ENCODE measurements at regions of chr4 and their contacts with region 1.

Region 1: DNA sequence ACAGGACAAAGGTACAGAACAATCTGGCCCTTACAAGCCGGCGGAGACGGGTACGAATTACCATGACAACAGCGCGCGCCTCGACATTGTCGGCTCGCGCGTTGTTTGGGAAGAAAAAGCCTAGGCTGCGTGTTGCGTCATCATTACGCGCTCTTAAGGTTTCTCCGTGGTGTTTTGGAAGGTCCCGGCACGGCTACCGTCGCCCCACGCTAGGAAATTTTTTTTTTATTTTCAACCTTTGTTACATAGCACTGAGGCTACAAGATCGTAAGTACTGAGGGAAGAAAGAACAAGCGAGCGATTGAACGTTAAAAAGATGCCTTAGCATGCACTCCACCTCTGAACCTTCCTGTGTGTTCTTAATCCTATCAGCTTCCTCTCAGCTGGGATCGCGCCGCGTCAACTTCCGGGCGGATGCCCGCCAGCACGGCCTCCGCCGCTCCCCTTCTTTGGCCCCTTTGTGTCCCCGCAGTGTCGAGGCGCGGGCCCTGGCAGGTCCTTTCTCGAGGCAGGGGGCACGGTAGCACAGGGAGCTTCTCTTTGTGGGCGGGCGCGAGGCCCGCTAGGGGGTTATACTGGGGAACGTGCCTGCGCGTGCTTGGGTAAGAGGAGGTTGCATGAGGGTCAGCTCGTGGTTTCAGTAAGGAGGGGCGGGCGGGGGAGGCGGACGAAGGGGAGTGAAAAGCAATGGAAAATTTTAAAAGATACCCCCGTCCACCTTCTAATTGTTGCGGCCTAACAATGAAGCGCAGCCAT is at the start of gene SMARCAD1:
- DNase-seq: peak; percentile 75 to 88
- H3K4me3 ChIP-seq: peak within 1 kb of the TSS; percentile 85 to 93 (median 88)
- H3K27ac ChIP-seq: peak within 1 kb of the TSS; percentile 95
- H3K4me1 ChIP-seq: peaks cover 0 to 8% (median 4%) of the 10 kb centered on the region in 4 experiments; a peak in 2 of 7 replicates
- H3K27me3 ChIP-seq: no peaks in the 10 kb centered on the region; a peak in 1 of 7 replicates
- CTCF ChIP-seq: no peak
- EP300 ChIP-seq: no peak; a peak in 1 of 3 replicates
- POLR2A ChIP-seq: peak; percentile 70 to 95
- RAD21 ChIP-seq: no peak
- total RNA-seq, gene SMARCAD1: 55.7 and 59.4 TPM in 2 replicates

Region 2: DNA sequence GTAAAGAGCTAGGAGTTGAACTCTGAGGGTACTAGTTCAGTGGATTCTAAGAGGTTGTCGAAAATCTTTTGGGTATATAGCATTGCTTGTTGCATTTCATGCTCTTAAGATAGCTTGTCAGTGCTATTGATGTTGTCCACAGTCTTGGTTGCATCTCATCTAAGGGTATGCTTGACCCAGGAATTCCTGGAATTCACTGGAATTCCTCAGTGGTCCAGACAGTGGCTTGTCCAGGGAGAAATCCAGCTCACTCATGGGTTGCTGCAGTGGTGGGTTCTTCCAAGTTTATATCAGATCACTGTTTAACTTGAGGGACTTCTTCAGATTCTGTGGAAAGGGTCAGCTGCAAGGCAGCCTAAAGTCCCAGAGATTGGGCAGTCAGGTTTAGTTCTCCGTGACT is 29.8 kb before region 1 on chr4:
- CTCF ChIA-PET with region 1: no interaction called
- POLR2A ChIA-PET with region 1: interaction called, 12 read pairs
- DNase-seq: no peak
- H3K4me3 ChIP-seq: no peak overlapping the region
- H3K27ac ChIP-seq: no peak overlapping the region
- H3K4me1 ChIP-seq: no peaks in the 10 kb centered on the region
- H3K27me3 ChIP-seq: no peaks in the 10 kb centered on the region
- CTCF ChIP-seq: no peak
- EP300 ChIP-seq: no peak
- POLR2A ChIP-seq: no peak
- RAD21 ChIP-seq: no peak